Activated naive CD4-positive, alpha-beta T cell treated with anti-CD3 and anti-CD28 coated beads for 36 hours (primary cell): ENCODE measurements at regions of chr4 and their contacts with region 1.

Region 1: GRCh38 chr4:56544573-56545131 is 39.1 kb downstream of the ARL9 start:
- DNase-seq: peak; percentile 86
- H3K4me3 Mint-ChIP-seq: peak overlapping the region; percentile 57
- H3K27ac Mint-ChIP-seq: no peak overlapping the region
- H3K4me1 Mint-ChIP-seq: peaks cover 14% of the 10 kb centered on the region
- H3K27me3 Mint-ChIP-seq: no peaks in the 10 kb centered on the region

Region 2: DNA sequence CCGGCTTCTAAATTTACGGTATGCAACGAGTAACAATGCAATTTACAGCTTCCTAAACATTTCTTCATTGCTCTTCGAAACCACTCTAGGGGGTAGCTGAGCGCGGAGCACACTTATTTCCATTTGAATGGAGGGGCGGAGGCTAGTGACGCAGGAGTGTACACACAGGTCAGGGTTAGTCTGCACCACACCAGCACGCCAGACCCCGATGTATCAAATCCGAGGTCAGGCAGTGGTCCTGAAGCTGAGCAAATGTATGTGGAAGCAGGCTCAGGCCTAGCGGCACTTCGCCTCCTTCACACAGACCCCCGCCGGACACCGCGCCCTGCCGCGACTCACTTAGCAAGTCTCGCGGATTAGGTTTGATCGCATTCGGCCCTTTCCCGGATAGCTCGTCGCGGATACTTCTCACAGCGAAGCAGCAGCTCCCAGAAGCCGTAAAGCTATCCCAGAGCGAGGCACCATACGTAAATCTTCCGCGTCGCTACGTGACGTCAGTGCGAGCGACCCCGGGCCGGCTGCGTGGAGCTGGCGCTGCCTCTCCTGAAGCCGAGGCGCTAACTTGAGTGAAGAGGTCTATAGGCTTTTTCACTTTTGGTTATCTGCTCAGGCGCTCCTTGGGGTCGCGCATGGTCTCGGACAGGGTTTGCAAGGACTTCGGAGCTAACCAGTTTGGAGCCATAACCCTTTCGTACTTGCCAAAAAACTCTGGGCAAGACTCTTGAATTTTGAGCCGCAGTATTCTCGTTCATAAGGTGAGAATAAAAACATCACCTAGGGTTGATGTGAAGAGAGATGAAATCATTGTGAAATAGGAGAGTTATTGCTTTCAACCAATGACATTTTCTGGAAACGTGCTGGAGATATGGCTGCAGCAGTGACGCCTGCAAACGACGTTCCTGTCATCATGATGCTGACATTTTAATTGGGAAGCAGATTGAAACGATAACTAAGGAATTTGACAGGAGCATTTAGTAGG is 157.3 kb before region 1 on chr4 and contains the start of gene AASDH:
- CTCF ChIA-PET with region 1: interaction called, 3 read pairs
- intact Hi-C with region 1: loop called (anchors 5 kb)
- DNase-seq: peak; percentile 97
- H3K4me3 Mint-ChIP-seq: peak within 1 kb of the TSS; percentile 87
- H3K27ac Mint-ChIP-seq: peak within 1 kb of the TSS; percentile 95
- H3K4me1 Mint-ChIP-seq: peaks cover 39% of the 10 kb centered on the region
- H3K27me3 Mint-ChIP-seq: no peaks in the 10 kb centered on the region
- total RNA-seq, gene AASDH: 13.5 to 17.0 TPM

Region 3: GRCh38 chr4:56424697-56425514 is 119.7 kb before region 1 on chr4:
- CTCF ChIA-PET with region 1: interaction called, 6 read pairs
- intact Hi-C with region 1: loop called (anchors 1 kb)
- DNase-seq: peak; percentile 51
- H3K4me3 Mint-ChIP-seq: no peak overlapping the region
- H3K27ac Mint-ChIP-seq: no peak overlapping the region
- H3K4me1 Mint-ChIP-seq: peaks cover 23% of the 10 kb centered on the region
- H3K27me3 Mint-ChIP-seq: no peaks in the 10 kb centered on the region

Region 4: GRCh38 chr4:56505269-56506130 is 39.2 kb before region 1 on chr4 and contains the start of gene ARL9:
- CTCF ChIA-PET with region 1: interaction called, 10 read pairs
- intact Hi-C with region 1: no loop called
- DNase-seq: peak; percentile 65
- H3K4me3 Mint-ChIP-seq: peak within 1 kb of the TSS; percentile 86
- H3K27ac Mint-ChIP-seq: no peak within 1 kb of the TSS
- H3K4me1 Mint-ChIP-seq: peaks cover 19% of the 10 kb centered on the region
- H3K27me3 Mint-ChIP-seq: peaks cover 8% of the 10 kb centered on the region
- total RNA-seq, gene ARL9: 0.21 to 0.27 TPM